ENCODE measurements at regions of chr6 and their contacts with region 1.

Region 1: GRCh38 chr6:27809939-27810767 is 102.0 kb downstream of the OR2B2 start:
- DNase-seq: peak; percentile 83
- ATAC-seq: peak; percentile 38
- H3K4me3 Mint-ChIP-seq: peak overlapping the region; percentile 89
- H3K27ac Mint-ChIP-seq: peak overlapping the region; percentile 97
- H3K4me1 Mint-ChIP-seq: peaks cover 52% of the 10 kb centered on the region
- H3K27me3 Mint-ChIP-seq: no peaks in the 10 kb centered on the region

Region 2: GRCh38 chr6:26025894-26026832 is 1784.0 kb before region 1 on chr6:
- POLR2A ChIA-PET with region 1: interaction called, 81 read pairs
- DNase-seq: peak; percentile 86
- ATAC-seq: peak; percentile 35
- H3K4me3 Mint-ChIP-seq: peak overlapping the region; percentile 89
- H3K27ac Mint-ChIP-seq: peak overlapping the region; percentile 99
- H3K4me1 Mint-ChIP-seq: peaks cover 75% of the 10 kb centered on the region
- H3K27me3 Mint-ChIP-seq: no peaks in the 10 kb centered on the region

Region 3: GRCh38 chr6:26196846-26197648 is 1613.1 kb before region 1 on chr6:
- POLR2A ChIA-PET with region 1: interaction called, 98 read pairs
- DNase-seq: peak; percentile 83
- ATAC-seq: peak; percentile 44
- H3K4me3 Mint-ChIP-seq: peak overlapping the region; percentile 87
- H3K27ac Mint-ChIP-seq: peak overlapping the region; percentile 96
- H3K4me1 Mint-ChIP-seq: peaks cover 48% of the 10 kb centered on the region
- H3K27me3 Mint-ChIP-seq: no peaks in the 10 kb centered on the region

Region 4: GRCh38 chr6:26285143-26286134 is 1524.7 kb before region 1 on chr6:
- POLR2A ChIA-PET with region 1: interaction called, 10 read pairs
- DNase-seq: peak; percentile 87
- ATAC-seq: peak; percentile 79
- H3K4me3 Mint-ChIP-seq: peak overlapping the region; percentile 72
- H3K27ac Mint-ChIP-seq: peak overlapping the region; percentile 92
- H3K4me1 Mint-ChIP-seq: peaks cover 37% of the 10 kb centered on the region
- H3K27me3 Mint-ChIP-seq: peaks cover 3% of the 10 kb centered on the region

Region 5: GRCh38 chr6:27138837-27139755 is 671.1 kb before region 1 on chr6:
- POLR2A ChIA-PET with region 1: interaction called, 413 read pairs
- DNase-seq: peak; percentile 81
- ATAC-seq: peak; percentile 73
- H3K4me3 Mint-ChIP-seq: peak overlapping the region; percentile 95
- H3K27ac Mint-ChIP-seq: peak overlapping the region; percentile 98
- H3K4me1 Mint-ChIP-seq: peaks cover 39% of the 10 kb centered on the region
- H3K27me3 Mint-ChIP-seq: no peaks in the 10 kb centered on the region

Region 6: GRCh38 chr6:27518881-27519795 is 291.0 kb before region 1 on chr6:
- POLR2A ChIA-PET with region 1: no interaction called
- DNase-seq: peak; percentile 57
- ATAC-seq: peak; percentile 68
- H3K4me3 Mint-ChIP-seq: peak overlapping the region; percentile 90
- H3K27ac Mint-ChIP-seq: peak overlapping the region; percentile 81
- H3K4me1 Mint-ChIP-seq: peaks cover 22% of the 10 kb centered on the region
- H3K27me3 Mint-ChIP-seq: peaks cover 34% of the 10 kb centered on the region

Region 7: DNA sequence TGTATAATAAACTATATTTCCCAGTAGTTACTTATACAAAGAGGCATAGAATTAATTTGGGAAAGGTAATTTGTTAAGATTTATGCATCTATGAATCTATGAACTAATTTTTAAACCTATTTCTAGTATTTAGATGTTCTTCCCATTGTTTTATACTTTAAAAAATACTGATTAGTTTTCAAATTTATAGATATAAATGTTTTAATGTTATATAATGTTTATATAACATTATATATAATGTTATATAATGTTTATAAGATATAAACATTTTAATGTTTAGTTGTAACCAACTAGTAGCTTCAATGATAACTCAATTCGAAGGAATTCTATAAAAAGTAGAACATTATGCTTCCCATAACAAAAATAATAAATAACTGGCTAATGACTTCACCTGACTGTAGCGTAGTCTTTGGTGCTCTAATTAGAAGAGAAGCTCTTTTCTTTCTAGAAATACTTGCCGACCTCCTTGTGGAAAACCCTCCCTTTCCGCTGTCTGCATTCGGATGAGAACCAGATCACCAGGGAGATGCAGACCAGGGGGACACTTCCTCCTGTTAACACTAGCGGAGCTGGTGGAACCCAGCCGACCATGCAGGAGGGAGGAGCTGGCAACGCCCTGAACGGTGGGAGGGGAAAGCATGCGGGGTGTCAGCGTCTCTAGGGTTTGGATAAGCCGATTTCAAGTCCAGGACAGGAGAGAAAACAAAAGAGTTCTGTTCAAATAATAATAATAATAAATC is 56.3 kb before region 1 on chr6:
- POLR2A ChIA-PET with region 1: interaction called, 11 read pairs
- DNase-seq: peak; percentile 72
- ATAC-seq: peak; percentile 65
- H3K4me3 Mint-ChIP-seq: peak overlapping the region; percentile 94
- H3K27ac Mint-ChIP-seq: peak overlapping the region; percentile 78
- H3K4me1 Mint-ChIP-seq: peaks cover 28% of the 10 kb centered on the region
- H3K27me3 Mint-ChIP-seq: no peaks in the 10 kb centered on the region

Region 8: GRCh38 chr6:27777614-27778355 is 32.4 kb before region 1 on chr6:
- POLR2A ChIA-PET with region 1: no interaction called
- DNase-seq: no peak
- ATAC-seq: no peak
- H3K4me3 Mint-ChIP-seq: no peak overlapping the region
- H3K27ac Mint-ChIP-seq: no peak overlapping the region
- H3K4me1 Mint-ChIP-seq: no peaks in the 10 kb centered on the region
- H3K27me3 Mint-ChIP-seq: peaks cover 29% of the 10 kb centered on the region

Region 9: GRCh38 chr6:27838058-27838944 is 28.1 kb after region 1 on chr6:
- POLR2A ChIA-PET with region 1: interaction called, 478 read pairs
- DNase-seq: peak; percentile 84
- ATAC-seq: peak; percentile 74
- H3K4me3 Mint-ChIP-seq: no peak overlapping the region
- H3K27ac Mint-ChIP-seq: no peak overlapping the region
- H3K4me1 Mint-ChIP-seq: peaks cover 26% of the 10 kb centered on the region
- H3K27me3 Mint-ChIP-seq: peaks cover 2% of the 10 kb centered on the region

Region 10: DNA sequence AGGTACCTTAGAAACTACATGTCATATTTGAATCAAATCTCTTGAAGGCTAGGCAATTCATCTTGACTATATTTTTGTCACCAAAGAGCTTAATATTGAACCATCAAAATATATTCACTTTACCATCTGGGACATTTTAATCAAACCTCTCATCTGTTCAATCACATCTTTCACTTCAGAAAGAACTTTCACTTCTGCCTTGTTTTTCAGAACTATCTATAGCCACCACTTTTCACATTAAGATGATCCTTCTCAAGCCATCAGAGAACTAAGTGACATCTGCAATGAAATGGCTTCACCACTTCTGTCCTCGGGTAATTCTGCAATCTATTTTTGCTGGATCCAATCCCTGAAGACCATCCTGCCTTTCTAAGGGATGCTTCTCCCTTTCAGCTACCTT is 44.3 kb after region 1 on chr6:
- POLR2A ChIA-PET with region 1: no interaction called
- DNase-seq: no peak
- ATAC-seq: no peak
- H3K4me3 Mint-ChIP-seq: no peak overlapping the region
- H3K27ac Mint-ChIP-seq: no peak overlapping the region
- H3K4me1 Mint-ChIP-seq: no peaks in the 10 kb centered on the region
- H3K27me3 Mint-ChIP-seq: peaks cover 9% of the 10 kb centered on the region